A673 (cell line): ENCODE measurements at regions of chr4 and their contacts with region 1.

Region 1: DNA sequence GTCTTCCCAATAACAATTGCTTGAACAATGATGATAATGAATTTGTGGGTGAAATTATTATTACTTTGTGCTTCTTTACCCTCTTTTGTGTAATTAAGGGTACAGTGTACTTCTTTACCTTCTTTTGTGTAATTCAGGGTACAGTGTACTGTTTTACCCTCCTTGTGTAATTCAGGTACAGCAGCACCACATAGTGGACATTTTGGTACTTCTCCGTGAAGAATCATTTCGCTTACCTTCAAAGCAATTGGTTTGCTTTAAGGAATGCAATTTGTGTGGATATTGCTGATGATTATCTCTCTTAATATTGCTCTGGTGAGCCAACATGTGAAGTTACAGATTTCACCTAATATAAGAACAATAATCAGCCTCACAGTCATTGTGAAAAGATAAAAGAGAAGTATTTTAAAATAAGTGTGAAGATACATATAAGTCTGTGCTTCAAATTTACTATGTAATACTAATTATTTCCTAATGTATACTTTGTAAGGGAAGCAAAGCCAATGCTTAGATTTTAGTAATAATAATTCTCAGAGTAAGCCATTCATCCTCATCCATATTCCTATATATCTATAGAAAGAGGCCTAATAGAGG is 27.2 kb upstream of the SEC24B start:
- DNase-seq: peak; percentile 80
- H3K4me3 ChIP-seq: no peak overlapping the region
- H3K27ac ChIP-seq: no peak overlapping the region
- H3K4me1 ChIP-seq: peaks cover 9% of the 10 kb centered on the region
- H3K27me3 ChIP-seq: no peaks in the 10 kb centered on the region
- CTCF ChIP-seq: peak; percentile 83

Region 2: DNA sequence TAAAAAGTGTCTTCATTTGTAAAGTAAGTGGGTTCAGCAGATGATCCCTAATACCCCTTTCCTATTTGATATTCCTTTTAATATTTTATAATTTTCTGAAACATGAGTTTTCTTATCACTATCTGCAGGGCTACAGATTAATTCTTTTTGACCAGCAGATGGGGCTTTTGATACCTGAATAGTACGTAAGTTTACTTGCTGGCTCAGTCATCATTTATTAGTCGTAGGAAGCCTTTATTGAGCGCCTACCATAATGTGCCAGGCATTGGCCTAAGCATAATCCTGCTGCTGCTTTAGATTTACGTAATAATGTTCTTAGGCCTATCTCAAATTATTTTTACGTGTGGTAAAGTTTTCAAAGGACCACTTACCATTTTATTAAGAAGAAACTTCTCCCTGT is 723.0 kb before region 1 on chr4:
- CTCF ChIA-PET with region 1: no interaction called
- POLR2A ChIA-PET with region 1: no interaction called
- intact Hi-C with region 1: loop called (anchors 2 kb)
- DNase-seq: peak; percentile 74
- H3K4me3 ChIP-seq: no peak overlapping the region
- H3K27ac ChIP-seq: no peak overlapping the region
- H3K4me1 ChIP-seq: peaks cover 10% of the 10 kb centered on the region
- H3K27me3 ChIP-seq: no peaks in the 10 kb centered on the region
- CTCF ChIP-seq: peak; percentile 65

Region 3: GRCh38 chr4:108940149-108940548 is 466.3 kb before region 1 on chr4:
- CTCF ChIA-PET with region 1: no interaction called
- POLR2A ChIA-PET with region 1: no interaction called
- intact Hi-C with region 1: no loop called
- DNase-seq: no peak
- H3K4me3 ChIP-seq: no peak overlapping the region
- H3K27ac ChIP-seq: no peak overlapping the region
- H3K4me1 ChIP-seq: peaks cover 23% of the 10 kb centered on the region
- H3K27me3 ChIP-seq: no peaks in the 10 kb centered on the region
- CTCF ChIP-seq: no peak